ENCODE measurements at regions of chr20 and their contacts with region 1.

Region 1: GRCh38 chr20:52905241-52905994 is 66.7 kb upstream of the TSHZ2 start:
- DNase-seq: no peak
- H3K4me3 ChIP-seq: no peak overlapping the region
- H3K27ac ChIP-seq: no peak overlapping the region
- H3K4me1 ChIP-seq: no peaks in the 10 kb centered on the region
- H3K27me3 ChIP-seq: no peaks in the 10 kb centered on the region
- CTCF ChIP-seq: no peak
- POLR2A ChIP-seq: no peak

Region 2: GRCh38 chr20:51142415-51142814 is 1763.0 kb before region 1 on chr20:
- intact Hi-C with region 1: loop called (anchors 5 kb)
- DNase-seq: no peak
- H3K4me3 ChIP-seq: no peak overlapping the region
- H3K27ac ChIP-seq: no peak overlapping the region
- H3K4me1 ChIP-seq: no peaks in the 10 kb centered on the region
- H3K27me3 ChIP-seq: no peaks in the 10 kb centered on the region
- CTCF ChIP-seq: no peak
- POLR2A ChIP-seq: no peak

Region 3: DNA sequence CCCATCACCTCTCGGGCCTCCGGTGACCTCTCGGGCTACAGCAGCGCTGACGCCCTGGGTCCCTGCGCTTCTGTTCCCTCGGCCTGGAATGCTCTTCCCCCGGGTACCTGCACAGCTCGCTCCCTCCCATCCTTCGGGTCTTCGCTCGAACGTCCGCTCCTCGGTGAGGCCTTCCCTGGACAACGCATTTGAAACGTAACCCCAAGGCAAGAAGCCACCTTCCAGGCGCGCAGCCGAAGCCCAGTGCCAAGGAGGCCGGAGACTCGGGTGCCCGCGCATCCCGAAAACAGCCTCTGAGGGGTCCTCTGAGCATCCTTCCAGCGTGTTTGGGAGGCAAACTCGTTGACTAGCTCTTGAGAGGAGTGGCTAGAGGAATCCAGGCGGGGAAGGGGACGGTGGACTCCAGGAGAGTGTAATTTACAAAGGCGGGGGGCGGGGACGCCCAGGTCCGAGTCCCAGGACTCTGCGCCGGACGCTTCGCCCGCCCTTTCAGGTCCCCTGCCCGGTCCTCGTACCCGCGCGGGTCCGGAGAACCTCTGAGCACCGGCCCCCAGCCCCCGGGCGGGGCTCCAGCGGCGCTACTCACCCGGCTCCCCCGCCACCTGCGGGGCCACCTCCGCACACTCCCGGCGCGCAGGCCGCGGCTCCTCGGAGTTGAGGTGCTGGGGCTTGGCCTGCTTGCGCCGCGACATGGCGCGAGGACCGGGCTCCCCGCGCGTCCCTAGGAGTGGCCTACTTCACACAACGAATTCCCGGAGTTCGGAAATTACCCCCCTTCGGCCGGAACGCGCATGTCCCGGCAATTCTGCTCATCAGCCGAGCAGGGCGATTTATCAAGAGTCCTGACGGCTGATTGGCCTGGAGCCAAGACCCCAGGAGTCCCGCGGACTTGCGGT is 800.6 kb before region 1 on chr20:
- intact Hi-C with region 1: loop called (anchors 5 kb)
- DNase-seq: no peak
- H3K4me3 ChIP-seq: peak overlapping the region; percentile 31 to 43
- H3K27ac ChIP-seq: no peak overlapping the region
- H3K4me1 ChIP-seq: peaks cover 26% of the 10 kb centered on the region
- H3K27me3 ChIP-seq: peaks cover 6% of the 10 kb centered on the region
- CTCF ChIP-seq: no peak
- POLR2A ChIP-seq: no peak

Region 4: DNA sequence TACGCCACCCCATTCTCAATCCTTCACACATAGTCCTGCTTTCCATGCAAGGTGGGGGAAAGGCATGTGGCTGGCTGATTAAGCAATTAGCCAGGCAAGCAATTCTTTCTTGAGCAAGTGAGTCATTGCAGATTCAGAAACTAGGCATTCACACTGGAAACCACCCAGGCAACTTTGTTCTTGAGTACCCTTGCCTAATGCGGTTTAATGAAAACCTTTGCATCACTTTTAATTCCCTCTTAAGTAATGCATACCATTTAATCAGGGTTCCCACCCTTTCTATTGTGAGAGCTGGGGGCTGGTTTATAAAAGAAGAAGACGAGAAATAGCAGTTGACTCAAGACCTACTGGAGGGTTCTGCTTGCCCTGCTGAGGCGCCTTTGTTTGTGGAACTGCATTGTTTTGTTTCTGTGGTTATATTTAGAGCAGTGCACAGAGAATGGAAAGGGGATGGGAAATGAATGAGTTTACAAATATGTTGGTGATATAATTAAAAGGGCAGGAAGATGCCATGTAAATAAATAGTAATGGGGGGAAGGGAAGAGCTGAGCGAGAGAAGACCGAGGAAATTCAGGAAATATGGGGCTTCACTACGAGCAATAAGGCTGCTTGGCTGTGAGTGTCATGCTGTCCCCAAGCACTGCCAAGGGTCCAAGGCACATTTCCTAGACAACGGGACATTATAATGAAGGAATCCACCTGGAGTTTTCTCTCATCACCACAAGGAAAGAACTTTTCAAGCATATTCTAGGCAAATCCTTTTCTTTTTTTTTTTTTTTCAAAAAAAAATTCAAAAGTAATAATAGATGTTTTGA is 17.9 kb after region 1 on chr20:
- intact Hi-C with region 1: no loop called
- DNase-seq: no peak
- H3K4me3 ChIP-seq: no peak overlapping the region
- H3K27ac ChIP-seq: no peak overlapping the region
- H3K4me1 ChIP-seq: no peaks in the 10 kb centered on the region
- H3K27me3 ChIP-seq: no peaks in the 10 kb centered on the region
- CTCF ChIP-seq: no peak
- POLR2A ChIP-seq: no peak

Measured in vagina (tissue), 2 donors.